ENCODE measurements at regions of chr18 and their contacts with region 1.

Region 1: DNA sequence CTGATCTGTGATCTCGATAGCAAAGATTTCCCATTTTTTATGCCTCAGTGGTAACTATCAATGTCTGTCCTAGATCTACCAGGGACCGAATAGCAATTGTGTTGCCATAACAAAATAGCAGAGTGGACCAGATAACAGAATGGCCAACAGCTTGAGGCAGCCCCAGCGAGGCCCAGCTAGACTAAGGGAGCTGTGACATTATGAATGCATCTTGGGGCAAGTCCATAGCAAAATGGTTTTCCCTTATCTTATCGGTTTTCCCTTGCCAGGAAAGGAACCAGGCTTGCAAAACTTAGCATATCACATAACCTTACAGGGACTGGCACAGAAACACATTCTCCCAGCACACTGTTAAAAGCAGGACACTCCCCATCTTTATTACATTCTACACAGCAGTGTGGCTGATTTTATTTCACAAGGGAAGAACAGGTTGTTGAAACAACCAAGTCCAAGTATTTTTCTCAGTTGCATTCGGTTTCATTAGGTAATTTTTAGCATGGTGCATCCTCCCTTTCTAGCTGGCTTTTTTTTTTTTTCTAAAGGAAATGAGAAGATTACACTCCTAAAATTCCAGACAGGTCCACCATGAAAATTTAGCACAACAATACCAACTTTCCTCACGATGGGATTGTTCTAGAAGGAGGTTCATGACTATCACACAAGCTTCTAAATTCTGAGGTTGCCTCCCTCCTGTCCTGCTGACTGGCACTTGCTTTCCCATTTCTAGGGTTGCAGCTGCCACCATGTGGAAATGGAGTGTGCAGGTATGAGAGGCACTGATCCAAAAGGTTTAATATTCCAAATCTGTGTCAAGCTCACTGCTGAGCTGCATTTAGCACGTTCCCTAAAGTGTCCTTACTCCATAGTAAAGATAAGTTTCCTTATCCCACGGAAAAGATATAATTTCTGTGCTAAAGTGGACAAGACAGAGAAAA is 97.0 kb upstream of the SLC35G4 start:
- DNase-seq: peak; percentile 49 to 52
- H3K4me3 ChIP-seq: no peak overlapping the region
- H3K4me3 Mint-ChIP-seq: no peak overlapping the region
- H3K27ac Mint-ChIP-seq: no peak overlapping the region
- H3K4me1 ChIP-seq: peaks cover 4% of the 10 kb centered on the region; the same call in 1 of the 2 replicates
- H3K4me1 Mint-ChIP-seq: no peaks in the 10 kb centered on the region
- H3K27me3 ChIP-seq: no peaks in the 10 kb centered on the region
- H3K27me3 Mint-ChIP-seq: no peaks in the 10 kb centered on the region
- CTCF ChIP-seq: peak in 1 of 2 experiments; percentile 61

Region 2: GRCh38 chr18:11553098-11553940 is 41.0 kb after region 1 on chr18:
- CTCF ChIA-PET with region 1: interaction called, 10 read pairs
- POLR2A ChIA-PET with region 1: no interaction called
- intact Hi-C with region 1: no loop called
- DNase-seq: peak; percentile 55 to 69
- H3K4me3 ChIP-seq: no peak overlapping the region
- H3K4me3 Mint-ChIP-seq: no peak overlapping the region
- H3K27ac Mint-ChIP-seq: no peak overlapping the region
- H3K4me1 ChIP-seq: no peaks in the 10 kb centered on the region
- H3K4me1 Mint-ChIP-seq: no peaks in the 10 kb centered on the region
- H3K27me3 ChIP-seq: no peaks in the 10 kb centered on the region; the same call in 1 of the 2 replicates
- H3K27me3 Mint-ChIP-seq: peaks cover 4% of the 10 kb centered on the region
- CTCF ChIP-seq: peak; percentile 87 to 89